Activated T-helper 1 cell treated with anti-CD3 and anti-CD28 coated beads, Interleukin-12 subunit alpha, Interleukin-12 subunit beta, Interleukin-2, Interleukin-4 antibody, amounts not matched to agents 30 ng/mL and 10 ng/mL and 1 ng/mL, durations not matched to agents 14 hours and 24 hours and 36 hours (primary cell): ENCODE measurements at regions of chr9 and their contacts with region 1.

Region 1: GRCh38 chr9:1536522-1537170 is 478.5 kb upstream of the SMARCA2 start:
- DNase-seq: no peak
- H3K4me3 Mint-ChIP-seq: no peak overlapping the region
- H3K27ac Mint-ChIP-seq: peak overlapping the region; percentile 48
- H3K4me1 Mint-ChIP-seq: peaks cover 18% of the 10 kb centered on the region
- H3K27me3 Mint-ChIP-seq: no peaks in the 10 kb centered on the region

Region 2: GRCh38 chr9:1505489-1505888 is 31.2 kb before region 1 on chr9:
- intact Hi-C with region 1: loop called (anchors 1 kb)
- DNase-seq: no peak
- H3K4me3 Mint-ChIP-seq: no peak overlapping the region
- H3K27ac Mint-ChIP-seq: peak overlapping the region; percentile 64
- H3K4me1 Mint-ChIP-seq: no peaks in the 10 kb centered on the region
- H3K27me3 Mint-ChIP-seq: no peaks in the 10 kb centered on the region